ENCODE measurements at regions of chr1 and their contacts with region 1.

Region 1: DNA sequence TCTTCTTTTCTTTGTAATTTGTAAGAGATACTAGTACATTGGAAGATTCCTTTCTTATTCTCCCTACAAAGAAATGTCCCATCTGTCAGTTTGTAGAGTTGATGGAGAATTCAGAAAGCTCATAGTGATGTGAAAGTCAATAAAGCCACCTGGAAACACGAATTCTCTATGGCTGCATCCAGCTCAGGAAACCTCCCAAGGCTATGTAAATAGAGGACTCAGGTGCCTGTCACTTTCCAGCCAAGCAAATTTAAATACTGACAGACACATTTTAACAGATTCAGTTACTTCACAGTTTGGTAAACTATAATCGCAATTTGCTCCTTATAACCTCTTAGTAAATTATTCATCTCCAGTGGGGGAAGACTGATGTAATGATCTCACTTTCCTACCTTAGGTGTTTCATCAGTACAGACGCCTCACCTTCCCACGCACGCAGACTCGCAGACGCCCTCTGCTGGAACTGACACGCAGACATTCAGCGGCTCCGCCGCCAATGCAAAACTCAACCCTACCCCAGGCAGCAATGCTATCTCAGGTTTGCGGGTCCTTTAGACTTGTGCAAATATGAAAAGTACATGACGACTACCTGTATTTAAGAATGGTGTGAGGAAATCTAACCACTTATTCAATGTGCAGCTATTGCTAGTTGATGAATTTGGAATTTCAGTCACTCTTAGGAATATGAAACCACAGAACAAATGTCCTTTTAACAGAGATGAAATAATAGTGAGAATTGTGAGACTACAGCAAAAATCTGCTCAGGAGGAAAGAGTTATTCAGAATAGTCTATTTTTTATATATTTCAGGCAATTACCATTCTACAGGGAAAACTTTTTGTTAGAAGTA is 60.6 kb downstream of the PTPRC start:
- DNase-seq: peak; percentile 61
- H3K4me3 ChIP-seq: no peak overlapping the region
- H3K27ac ChIP-seq: no peak overlapping the region
- H3K4me1 ChIP-seq: no peaks in the 10 kb centered on the region
- H3K27me3 ChIP-seq: peaks cover 0 to 4% of the 10 kb centered on the region in 2 experiments
- CTCF ChIP-seq: peak; percentile 73 to 90
- POLR2A ChIP-seq: no peak

Region 2: DNA sequence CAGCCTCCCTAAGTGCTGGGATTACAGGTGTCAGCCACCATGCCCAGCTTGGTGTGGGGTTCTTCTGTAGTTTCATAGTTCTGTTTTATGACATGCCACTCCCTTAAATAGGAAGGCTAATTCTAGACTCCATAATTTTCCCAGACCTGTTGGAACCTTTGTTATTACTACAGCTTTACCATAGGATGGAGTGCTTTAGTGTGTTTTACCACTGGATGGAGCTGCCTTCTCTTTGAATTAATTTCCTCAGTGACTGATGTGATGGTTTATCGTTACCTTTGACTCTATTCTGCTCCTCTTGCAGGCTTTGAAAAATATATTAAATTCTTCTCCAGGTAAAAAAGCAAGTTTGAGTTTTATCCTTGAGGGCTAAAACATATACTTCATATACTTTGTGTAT is 627.2 kb before region 1 on chr1:
- CTCF ChIA-PET with region 1: interaction called, 4 read pairs
- POLR2A ChIA-PET with region 1: no interaction called
- dilution Hi-C with region 1: no loop called
- intact Hi-C with region 1: loop called (anchors 5 kb)
- DNase-seq: peak; percentile 37
- H3K4me3 ChIP-seq: no peak overlapping the region
- H3K27ac ChIP-seq: no peak overlapping the region
- H3K4me1 ChIP-seq: no peaks in the 10 kb centered on the region
- H3K27me3 ChIP-seq: no peaks in the 10 kb centered on the region
- CTCF ChIP-seq: peak; percentile 4 to 26
- POLR2A ChIP-seq: no peak

Measured in endothelial cell of umbilical vein (primary cell).